T-cell (primary cell): ENCODE measurements at regions of chr7 and their contacts with region 1.

Region 1: GRCh38 chr7:112449902-112450806 is at the start of gene IFRD1:
- DNase-seq: peak; percentile 89 to 99 (median 96)
- ATAC-seq: peak; percentile 83 to 89 (median 84)
- H3K4me3 ChIP-seq: peak within 1 kb of the TSS; percentile 96 to 98
- H3K4me3 Mint-ChIP-seq: peak within 1 kb of the TSS; percentile 94 to 99 (median 99)
- H3K27ac ChIP-seq: peak within 1 kb of the TSS; percentile 99
- H3K27ac Mint-ChIP-seq: peak within 1 kb of the TSS; percentile 97 to 98
- H3K4me1 ChIP-seq: peaks cover 7 to 22% of the 10 kb centered on the region in 2 experiments
- H3K4me1 Mint-ChIP-seq: peaks cover 41 to 58% (median 43%) of the 10 kb centered on the region in 3 donors
- H3K27me3 ChIP-seq: no peaks in the 10 kb centered on the region
- H3K27me3 Mint-ChIP-seq: no peaks in the 10 kb centered on the region
- total RNA-seq, gene IFRD1: 45.0 to 268 (median 52.1) TPM

Region 2: GRCh38 chr7:112167147-112167546 is 283.0 kb before region 1 on chr7:
- CTCF ChIA-PET with region 1: no interaction called
- POLR2A ChIA-PET with region 1: no interaction called
- DNase-seq: no peak
- ATAC-seq: no peak
- H3K4me3 ChIP-seq: no peak overlapping the region
- H3K4me3 Mint-ChIP-seq: no peak overlapping the region
- H3K27ac ChIP-seq: no peak overlapping the region
- H3K27ac Mint-ChIP-seq: no peak overlapping the region
- H3K4me1 ChIP-seq: no peaks in the 10 kb centered on the region
- H3K4me1 Mint-ChIP-seq: no peaks in the 10 kb centered on the region
- H3K27me3 ChIP-seq: no peaks in the 10 kb centered on the region
- H3K27me3 Mint-ChIP-seq: peaks cover 5 to 14% of the 10 kb centered on the region in 2 donors

Region 3: DNA sequence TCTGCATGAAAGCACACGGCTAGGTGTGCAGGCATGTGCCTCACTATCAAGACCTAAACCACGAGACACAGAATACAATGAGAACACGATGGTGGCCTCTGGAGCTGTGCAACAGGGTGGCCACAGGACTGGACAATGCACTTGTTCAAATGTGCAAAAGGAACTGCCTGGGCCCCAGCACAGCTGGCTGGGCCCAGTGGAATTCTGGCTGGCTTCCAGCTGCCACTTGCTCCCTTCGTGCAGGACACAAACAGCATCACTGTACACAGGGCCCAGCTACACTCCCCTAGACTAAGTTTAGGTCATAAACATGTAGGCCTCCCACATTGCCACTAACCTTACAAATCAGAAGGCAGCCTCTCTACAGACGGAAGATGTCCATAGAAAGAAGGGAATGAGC is 267.4 kb before region 1 on chr7:
- CTCF ChIA-PET with region 1: no interaction called
- POLR2A ChIA-PET with region 1: no interaction called
- DNase-seq: no peak
- ATAC-seq: no peak
- H3K4me3 ChIP-seq: no peak overlapping the region
- H3K4me3 Mint-ChIP-seq: no peak overlapping the region
- H3K27ac ChIP-seq: no peak overlapping the region
- H3K27ac Mint-ChIP-seq: no peak overlapping the region
- H3K4me1 ChIP-seq: no peaks in the 10 kb centered on the region
- H3K4me1 Mint-ChIP-seq: no peaks in the 10 kb centered on the region
- H3K27me3 ChIP-seq: peaks cover 0 to 5% of the 10 kb centered on the region in 2 experiments
- H3K27me3 Mint-ChIP-seq: peaks cover 14 to 20% of the 10 kb centered on the region in 2 donors

Region 4: GRCh38 chr7:112462236-112462635 is 12.1 kb after region 1 on chr7:
- CTCF ChIA-PET with region 1: no interaction called
- POLR2A ChIA-PET with region 1: interaction called, 11 to 37 read pairs
- DNase-seq: no peak
- ATAC-seq: no peak
- H3K4me3 ChIP-seq: no peak overlapping the region
- H3K4me3 Mint-ChIP-seq: no peak overlapping the region
- H3K27ac ChIP-seq: no peak overlapping the region
- H3K27ac Mint-ChIP-seq: no peak overlapping the region
- H3K4me1 ChIP-seq: no peaks in the 10 kb centered on the region
- H3K4me1 Mint-ChIP-seq: peaks cover 4 to 6% (median 6%) of the 10 kb centered on the region in 3 donors
- H3K27me3 ChIP-seq: no peaks in the 10 kb centered on the region
- H3K27me3 Mint-ChIP-seq: no peaks in the 10 kb centered on the region

Region 5: DNA sequence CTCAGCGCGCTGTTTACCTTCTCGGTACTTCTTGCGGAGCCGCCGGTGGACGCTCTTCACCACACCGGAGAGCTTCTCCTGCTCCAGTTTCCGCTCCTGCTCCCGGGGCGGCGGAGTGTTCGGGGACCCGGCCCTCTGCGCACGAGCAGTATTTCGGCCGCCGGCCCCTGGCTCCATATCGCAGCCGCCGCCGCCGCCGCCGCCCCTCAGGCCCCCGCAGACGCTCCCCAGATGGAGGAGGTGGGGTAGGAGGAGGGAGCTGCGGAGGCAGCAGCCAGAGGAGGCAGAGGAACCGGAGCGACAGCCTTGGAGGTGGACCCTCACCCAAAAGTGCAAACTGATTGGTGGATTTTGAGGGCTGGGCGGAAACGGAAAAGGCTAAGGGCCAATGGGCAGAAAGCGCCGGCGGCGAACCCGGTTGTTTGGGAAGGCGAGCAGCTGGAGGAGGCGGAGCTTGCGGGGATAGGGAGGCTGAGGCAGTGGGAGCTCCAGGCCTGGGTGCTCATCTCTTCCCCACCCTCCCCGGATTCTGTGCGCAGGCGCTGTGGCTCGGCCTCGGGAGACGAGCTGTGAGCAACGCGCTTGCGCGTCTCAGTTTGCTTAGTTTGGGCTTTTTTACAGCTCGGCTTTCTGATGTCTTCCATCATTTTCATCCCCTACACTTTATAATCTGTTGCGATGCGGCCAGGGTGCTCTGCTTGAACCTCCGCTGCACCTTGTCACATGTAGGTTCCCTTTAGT is 489.6 kb after region 1 on chr7:
- CTCF ChIA-PET with region 1: interaction called in 1 of 2 experiments, 3 read pairs
- POLR2A ChIA-PET with region 1: interaction called in 1 of 2 experiments, 10 read pairs
- DNase-seq: peak; percentile 98 to 100 (median 99)
- ATAC-seq: peak; percentile 96 to 98 (median 98)
- H3K4me3 ChIP-seq: peak overlapping the region; percentile 89 to 92
- H3K4me3 Mint-ChIP-seq: peak overlapping the region; percentile 86 to 95 (median 87)
- H3K27ac ChIP-seq: peak overlapping the region; percentile 69
- H3K27ac Mint-ChIP-seq: peak overlapping the region; percentile 96
- H3K4me1 ChIP-seq: peaks cover 15 to 20% of the 10 kb centered on the region in 2 experiments
- H3K4me1 Mint-ChIP-seq: peaks cover 46 to 51% (median 48%) of the 10 kb centered on the region in 3 donors
- H3K27me3 ChIP-seq: no peaks in the 10 kb centered on the region
- H3K27me3 Mint-ChIP-seq: no peaks in the 10 kb centered on the region